ENCODE measurements at regions of chr11 and their contacts with region 1.

Region 1: GRCh38 chr11:9304178-9304577 is 10.2 kb downstream of the TMEM41B start:
- DNase-seq: no peak
- ATAC-seq: no peak
- H3K4me3 ChIP-seq: no peak overlapping the region
- H3K4me3 Mint-ChIP-seq: no peak overlapping the region
- H3K27ac ChIP-seq: no peak overlapping the region
- H3K27ac Mint-ChIP-seq: no peak overlapping the region
- H3K4me1 ChIP-seq: peaks cover 2% of the 10 kb centered on the region
- H3K4me1 Mint-ChIP-seq: peaks cover 34% of the 10 kb centered on the region
- H3K27me3 ChIP-seq: no peaks in the 10 kb centered on the region
- H3K27me3 Mint-ChIP-seq: no peaks in the 10 kb centered on the region
- CTCF ChIP-seq: no peak

Region 2: GRCh38 chr11:9060700-9061111 is 243.5 kb before region 1 on chr11:
- CTCF ChIA-PET with region 1: no interaction called
- POLR2A ChIA-PET with region 1: no interaction called
- intact Hi-C with region 1: no loop called
- DNase-seq: peak in 2 of 9 experiments; percentile 11 to 14
- ATAC-seq: no peak
- H3K4me3 ChIP-seq: no peak overlapping the region
- H3K4me3 Mint-ChIP-seq: no peak overlapping the region
- H3K27ac ChIP-seq: no peak overlapping the region
- H3K27ac Mint-ChIP-seq: no peak overlapping the region
- H3K4me1 ChIP-seq: no peaks in the 10 kb centered on the region
- H3K4me1 Mint-ChIP-seq: no peaks in the 10 kb centered on the region
- H3K27me3 ChIP-seq: no peaks in the 10 kb centered on the region
- H3K27me3 Mint-ChIP-seq: peaks cover 3% of the 10 kb centered on the region
- CTCF ChIP-seq: no peak

Region 3: GRCh38 chr11:9330387-9331384 is 26.5 kb after region 1 on chr11:
- CTCF ChIA-PET with region 1: no interaction called
- POLR2A ChIA-PET with region 1: no interaction called
- intact Hi-C with region 1: loop called in 1 of 2 experiments (anchors 2 kb)
- DNase-seq: no peak
- ATAC-seq: no peak
- H3K4me3 ChIP-seq: no peak overlapping the region
- H3K4me3 Mint-ChIP-seq: no peak overlapping the region
- H3K27ac ChIP-seq: no peak overlapping the region
- H3K27ac Mint-ChIP-seq: no peak overlapping the region
- H3K4me1 ChIP-seq: no peaks in the 10 kb centered on the region
- H3K4me1 Mint-ChIP-seq: no peaks in the 10 kb centered on the region
- H3K27me3 ChIP-seq: no peaks in the 10 kb centered on the region
- H3K27me3 Mint-ChIP-seq: no peaks in the 10 kb centered on the region
- CTCF ChIP-seq: no peak

Region 4: GRCh38 chr11:10540923-10541560 is 1236.9 kb after region 1 on chr11 and contains the start of gene RNF141:
- CTCF ChIA-PET with region 1: no interaction called
- POLR2A ChIA-PET with region 1: no interaction called
- intact Hi-C with region 1: no loop called
- DNase-seq: peak; percentile 89 to 98 (median 95)
- ATAC-seq: peak; percentile 98
- H3K4me3 ChIP-seq: peak within 1 kb of the TSS; percentile 78 to 83
- H3K4me3 Mint-ChIP-seq: peak within 1 kb of the TSS; percentile 91
- H3K27ac ChIP-seq: peak within 1 kb of the TSS; percentile 77 to 85
- H3K27ac Mint-ChIP-seq: peak within 1 kb of the TSS; percentile 89
- H3K4me1 ChIP-seq: peaks cover 13% of the 10 kb centered on the region
- H3K4me1 Mint-ChIP-seq: peaks cover 32% of the 10 kb centered on the region
- H3K27me3 ChIP-seq: no peaks in the 10 kb centered on the region
- H3K27me3 Mint-ChIP-seq: no peaks in the 10 kb centered on the region
- CTCF ChIP-seq: peak; percentile 85
- total RNA-seq, gene RNF141: 17.3 to 19.2 TPM

Measured in CD8-positive, alpha-beta T cell (primary cell).